ENCODE measurements at regions of chrX and their contacts with region 1.

Region 1: DNA sequence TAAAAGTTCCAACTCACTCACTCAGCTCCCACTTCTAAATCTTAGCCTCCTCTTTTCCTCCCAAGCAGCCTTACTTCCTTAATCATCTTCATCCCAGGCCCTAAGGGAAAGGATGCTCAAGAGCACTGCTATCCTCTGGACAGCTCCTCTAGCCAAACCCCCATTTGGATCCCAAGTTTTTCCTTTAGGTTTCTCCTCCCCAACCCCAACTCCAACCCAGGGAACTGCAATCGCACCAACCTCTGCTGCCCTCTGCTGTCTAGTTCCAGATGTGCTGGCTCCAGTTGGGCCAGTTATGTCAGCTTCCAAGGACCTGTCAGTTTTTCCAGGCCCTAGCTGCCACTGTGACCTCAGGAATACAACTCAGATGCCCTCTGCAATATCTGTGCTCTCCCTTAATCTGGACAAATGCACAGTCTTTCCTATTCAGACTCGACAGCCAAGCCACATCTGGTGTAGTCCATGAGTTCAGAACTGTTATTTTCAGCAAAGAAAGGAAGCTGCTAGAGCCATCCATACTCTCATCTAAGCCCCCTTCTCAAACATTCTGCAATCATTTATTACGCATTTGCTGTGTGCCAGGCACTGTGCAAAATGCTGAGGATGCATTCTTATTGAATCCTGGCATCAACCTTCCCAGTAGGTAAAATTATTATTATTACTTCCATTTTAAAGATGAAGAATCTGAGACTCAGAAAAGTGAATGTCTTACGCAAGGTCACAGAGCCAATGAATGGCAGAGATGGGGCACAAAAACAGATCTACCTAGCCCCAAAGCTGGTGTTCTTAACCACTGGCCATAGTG is 12.3 kb upstream of the XPNPEP2 start:
- DNase-seq: peak; percentile 62
- H3K4me3 Mint-ChIP-seq: no peak overlapping the region
- H3K27ac Mint-ChIP-seq: no peak overlapping the region
- H3K4me1 Mint-ChIP-seq: no peaks in the 10 kb centered on the region
- H3K27me3 Mint-ChIP-seq: peaks cover 73% of the 10 kb centered on the region
- CTCF ChIP-seq: peak; percentile 75

Region 2: GRCh38 chrX:129618997-129619396 is 107.5 kb before region 1 on chrX:
- CTCF ChIA-PET with region 1: interaction called, 15 read pairs
- POLR2A ChIA-PET with region 1: no interaction called
- intact Hi-C with region 1: no loop called
- DNase-seq: no peak
- H3K4me3 Mint-ChIP-seq: no peak overlapping the region
- H3K27ac Mint-ChIP-seq: no peak overlapping the region
- H3K4me1 Mint-ChIP-seq: no peaks in the 10 kb centered on the region
- H3K27me3 Mint-ChIP-seq: peaks cover 12% of the 10 kb centered on the region
- CTCF ChIP-seq: no peak

Region 3: GRCh38 chrX:129654419-129655165 is 71.9 kb before region 1 on chrX and contains the start of gene APLN:
- CTCF ChIA-PET with region 1: interaction called, 33 read pairs
- POLR2A ChIA-PET with region 1: no interaction called
- intact Hi-C with region 1: loop called (anchors 1 kb)
- DNase-seq: no peak
- H3K4me3 Mint-ChIP-seq: peak within 1 kb of the TSS; percentile 71
- H3K27ac Mint-ChIP-seq: no peak within 1 kb of the TSS
- H3K4me1 Mint-ChIP-seq: no peaks in the 10 kb centered on the region
- H3K27me3 Mint-ChIP-seq: peaks cover 45% of the 10 kb centered on the region
- CTCF ChIP-seq: no peak
- total RNA-seq, gene APLN: not detected in 2 replicates

Region 4: DNA sequence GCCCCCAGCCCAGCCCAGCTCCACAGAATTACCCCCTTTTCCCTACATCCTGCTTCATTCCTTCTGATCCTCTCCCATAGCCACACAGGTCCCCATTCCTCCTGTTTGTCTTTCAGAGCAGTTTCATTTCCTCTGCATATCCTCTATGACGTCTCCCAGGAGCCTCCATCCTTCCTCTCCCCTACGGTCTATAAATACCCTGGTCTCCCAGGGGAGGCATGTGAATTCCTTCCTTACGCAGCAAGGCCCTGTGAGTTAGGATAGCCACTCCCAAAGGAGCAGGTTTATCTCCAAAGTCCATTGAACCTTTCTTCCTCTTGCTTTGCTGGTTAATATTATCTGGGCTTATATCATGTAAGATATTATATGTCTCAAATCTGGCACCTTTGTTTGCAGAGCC is 63.3 kb before region 1 on chrX:
- CTCF ChIA-PET with region 1: interaction called, 10 read pairs
- POLR2A ChIA-PET with region 1: no interaction called
- intact Hi-C with region 1: no loop called
- DNase-seq: no peak
- H3K4me3 Mint-ChIP-seq: no peak overlapping the region
- H3K27ac Mint-ChIP-seq: no peak overlapping the region
- H3K4me1 Mint-ChIP-seq: peaks cover 6% of the 10 kb centered on the region
- H3K27me3 Mint-ChIP-seq: peaks cover 35% of the 10 kb centered on the region
- CTCF ChIP-seq: no peak

Region 5: DNA sequence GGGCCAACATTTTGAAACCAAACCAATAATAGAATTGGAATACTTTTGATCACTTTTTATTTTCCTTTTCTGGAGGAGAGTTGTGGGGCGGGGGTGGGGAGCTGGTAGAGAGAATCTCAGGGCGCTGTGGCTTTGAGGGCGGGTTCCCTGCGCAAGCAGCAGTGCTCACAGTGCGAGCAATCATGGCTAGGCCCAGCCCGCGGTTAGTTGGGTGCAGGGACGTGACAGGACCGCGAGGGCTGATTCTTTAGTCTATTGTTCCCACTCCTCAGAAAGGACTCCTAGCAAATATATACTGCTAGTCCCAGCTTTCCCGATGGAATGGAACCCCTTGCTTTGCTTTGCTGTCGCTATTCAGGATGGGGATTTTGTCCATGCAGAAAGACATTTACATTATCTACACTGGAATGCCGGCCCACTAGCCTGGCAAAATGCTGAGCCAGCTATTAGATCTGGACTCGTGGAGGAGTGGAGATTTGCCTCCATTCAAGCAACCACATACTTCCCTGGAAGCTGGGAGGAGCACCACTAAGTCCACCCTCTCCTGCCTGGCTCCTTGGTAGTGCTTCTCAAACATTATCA is 47.8 kb before region 1 on chrX:
- CTCF ChIA-PET with region 1: interaction called, 10 read pairs
- POLR2A ChIA-PET with region 1: no interaction called
- intact Hi-C with region 1: no loop called
- DNase-seq: no peak
- H3K4me3 Mint-ChIP-seq: no peak overlapping the region
- H3K27ac Mint-ChIP-seq: no peak overlapping the region
- H3K4me1 Mint-ChIP-seq: no peaks in the 10 kb centered on the region
- H3K27me3 Mint-ChIP-seq: peaks cover 33% of the 10 kb centered on the region
- CTCF ChIP-seq: no peak

Region 6: GRCh38 chrX:129818123-129818522 is 91.6 kb after region 1 on chrX:
- CTCF ChIA-PET with region 1: no interaction called
- POLR2A ChIA-PET with region 1: no interaction called
- intact Hi-C with region 1: no loop called
- DNase-seq: no peak
- H3K4me3 Mint-ChIP-seq: no peak overlapping the region
- H3K27ac Mint-ChIP-seq: no peak overlapping the region
- H3K4me1 Mint-ChIP-seq: no peaks in the 10 kb centered on the region
- H3K27me3 Mint-ChIP-seq: no peaks in the 10 kb centered on the region
- CTCF ChIP-seq: no peak

Measured in MCF 10A (cell line).